ENCODE measurements at regions of chr12 and their contacts with region 1.

Region 1: DNA sequence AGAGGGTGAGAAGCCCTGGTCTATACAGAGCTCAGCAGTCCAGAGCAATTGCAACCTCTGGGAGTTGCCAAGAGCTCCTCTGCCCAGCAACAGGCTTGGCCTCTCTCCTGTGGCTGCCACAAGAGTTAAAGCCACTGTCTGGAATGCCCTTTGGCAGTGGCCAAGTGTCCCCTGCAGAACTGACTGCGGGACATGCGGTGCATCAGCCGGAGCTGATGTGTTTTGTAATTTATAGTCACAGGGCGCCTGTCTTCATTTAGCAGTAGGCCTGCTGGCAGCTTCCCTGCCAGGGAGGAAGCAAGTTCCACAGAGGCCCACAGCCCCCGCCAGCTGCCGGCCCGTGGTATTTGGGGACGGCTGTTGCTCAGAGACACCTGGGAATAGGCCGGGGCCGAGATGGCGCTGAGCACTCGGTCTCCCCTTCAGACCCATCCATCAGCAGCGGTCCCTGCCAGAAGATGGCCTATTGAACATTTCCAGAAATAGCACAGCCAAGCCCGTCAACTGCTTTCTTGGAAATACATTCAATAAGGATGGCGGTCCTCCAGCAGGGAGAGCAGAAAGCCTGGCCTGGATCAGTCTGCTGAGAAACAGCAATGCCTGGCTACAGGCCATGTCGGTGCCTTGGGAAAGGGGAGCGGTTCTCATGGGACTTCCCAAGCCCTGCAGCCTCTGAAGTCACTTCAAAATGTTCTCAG is 217.4 kb downstream of the CRADD start:
- DNase-seq: peak; percentile 92

Region 2: DNA sequence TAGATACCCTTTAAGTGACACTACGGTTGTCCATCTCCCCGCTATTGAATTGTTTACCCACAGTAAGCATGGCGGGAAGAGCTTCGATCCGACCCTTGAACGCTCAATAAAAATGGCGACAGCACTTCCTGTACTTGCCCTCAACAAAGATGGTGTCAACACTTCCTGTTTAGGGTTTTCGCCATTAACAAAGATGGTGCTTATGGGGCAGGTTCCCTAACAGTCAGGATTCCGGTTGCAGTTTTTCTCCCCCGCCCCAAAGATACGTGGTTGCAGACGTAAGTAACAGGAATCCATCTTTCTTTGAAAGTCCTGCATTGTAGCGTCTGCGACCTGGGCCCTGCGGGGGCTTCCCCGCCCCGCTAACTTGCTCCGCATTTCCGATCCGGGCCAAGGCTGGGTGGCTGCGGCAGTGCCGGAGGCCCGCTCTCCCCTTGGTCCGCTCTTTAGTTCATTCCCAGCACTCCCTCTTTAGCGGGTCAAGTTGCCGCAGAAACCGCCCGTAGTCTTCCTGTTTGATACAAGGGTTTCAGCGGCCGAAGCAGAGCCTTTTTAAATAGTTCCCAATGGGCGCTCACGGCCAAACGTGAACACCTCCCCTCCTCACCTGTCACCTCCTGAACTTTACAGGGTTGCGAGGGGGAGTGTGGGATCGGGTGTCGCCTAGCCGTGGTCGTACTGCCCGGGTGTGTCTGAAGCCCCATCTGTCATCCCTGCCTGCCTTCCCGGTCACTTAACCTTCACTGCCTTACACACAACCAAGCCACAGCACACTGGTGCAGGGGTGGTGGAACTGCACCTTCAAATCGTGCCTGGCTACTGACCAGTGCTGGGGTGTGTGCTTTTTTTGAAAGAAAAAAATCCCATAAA is 217.1 kb before region 1 on chr12 and contains the start of gene CRADD:
- intact Hi-C with region 1: loop called (anchors 2 kb)
- DNase-seq: peak; percentile 87
- total RNA-seq, gene CRADD: 50.8 TPM

Region 3: GRCh38 chr12:93785262-93786010 is 109.1 kb before region 1 on chr12:
- intact Hi-C with region 1: loop called (anchors 5 kb)
- DNase-seq: no peak

Region 4: GRCh38 chr12:93796729-93797128 is 97.8 kb before region 1 on chr12:
- intact Hi-C with region 1: no loop called
- DNase-seq: no peak

Region 5: DNA sequence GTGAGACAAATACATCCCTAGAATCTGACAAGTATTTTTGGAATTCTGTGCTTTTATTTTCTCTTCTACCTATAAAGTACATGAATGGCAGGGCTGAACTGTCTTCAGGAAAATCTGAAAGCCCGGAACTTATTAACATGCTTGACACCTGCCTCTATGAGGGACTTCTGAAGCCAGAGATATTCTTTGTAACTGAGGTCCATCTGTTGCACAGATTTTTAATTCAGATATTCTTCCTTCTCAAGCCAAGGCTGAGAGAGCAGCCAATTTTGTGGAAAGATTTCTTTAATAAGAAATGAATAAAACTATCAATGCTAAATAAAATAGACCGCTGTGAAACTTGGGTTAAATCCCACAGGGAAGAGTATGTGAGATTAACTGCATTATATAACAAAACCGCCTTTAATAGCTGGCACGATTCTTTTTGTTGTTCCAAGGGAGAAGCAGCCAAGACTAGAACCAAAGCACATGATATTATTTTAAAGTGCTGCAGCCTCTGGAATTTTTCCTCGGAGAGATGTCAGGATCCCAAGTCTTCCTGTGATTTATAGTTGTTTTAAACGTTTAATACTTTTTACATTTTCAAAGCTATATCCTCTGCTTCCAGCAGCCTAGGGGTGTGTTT is 68.5 kb before region 1 on chr12:
- intact Hi-C with region 1: loop called (anchors 5 kb)
- DNase-seq: no peak

Region 6: DNA sequence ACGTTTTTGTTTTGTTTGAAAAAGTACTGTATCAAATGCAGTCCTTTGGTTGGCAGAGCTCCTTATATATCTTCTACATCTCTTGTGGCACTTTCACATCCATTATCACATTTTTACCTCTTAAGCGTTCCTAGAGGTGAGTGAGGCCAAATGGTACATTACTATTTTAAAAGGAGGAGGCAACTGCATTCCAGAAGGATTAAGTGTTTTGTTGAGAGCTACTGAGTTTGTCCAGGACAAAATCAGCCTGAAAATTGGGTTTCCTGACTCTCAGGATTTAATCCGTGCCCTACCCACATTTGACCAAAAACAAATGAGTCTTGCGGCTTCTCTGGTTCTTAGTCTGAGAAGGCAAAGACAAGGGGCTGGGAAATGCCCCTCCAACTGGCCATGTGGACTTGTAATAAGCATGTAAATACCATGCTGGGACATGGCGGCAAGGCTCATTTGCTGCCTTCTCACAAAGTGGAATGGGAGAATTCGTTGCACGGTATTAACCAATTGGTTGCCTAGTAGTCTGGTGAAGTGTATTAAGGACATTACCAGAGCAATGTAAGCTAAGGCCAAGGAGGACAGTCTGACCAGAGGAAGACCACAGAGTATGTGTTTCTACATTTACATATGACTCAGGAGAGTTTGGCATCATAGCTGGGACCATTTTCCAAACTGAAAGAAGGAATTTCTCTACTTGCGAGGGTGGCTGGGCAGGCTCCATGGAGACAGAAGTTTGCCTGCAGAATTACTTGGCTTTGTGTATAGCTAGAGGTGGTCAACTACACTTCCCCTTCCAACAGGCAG is 78.1 kb after region 1 on chr12:
- intact Hi-C with region 1: loop called (anchors 5 kb)
- DNase-seq: no peak

Region 7: DNA sequence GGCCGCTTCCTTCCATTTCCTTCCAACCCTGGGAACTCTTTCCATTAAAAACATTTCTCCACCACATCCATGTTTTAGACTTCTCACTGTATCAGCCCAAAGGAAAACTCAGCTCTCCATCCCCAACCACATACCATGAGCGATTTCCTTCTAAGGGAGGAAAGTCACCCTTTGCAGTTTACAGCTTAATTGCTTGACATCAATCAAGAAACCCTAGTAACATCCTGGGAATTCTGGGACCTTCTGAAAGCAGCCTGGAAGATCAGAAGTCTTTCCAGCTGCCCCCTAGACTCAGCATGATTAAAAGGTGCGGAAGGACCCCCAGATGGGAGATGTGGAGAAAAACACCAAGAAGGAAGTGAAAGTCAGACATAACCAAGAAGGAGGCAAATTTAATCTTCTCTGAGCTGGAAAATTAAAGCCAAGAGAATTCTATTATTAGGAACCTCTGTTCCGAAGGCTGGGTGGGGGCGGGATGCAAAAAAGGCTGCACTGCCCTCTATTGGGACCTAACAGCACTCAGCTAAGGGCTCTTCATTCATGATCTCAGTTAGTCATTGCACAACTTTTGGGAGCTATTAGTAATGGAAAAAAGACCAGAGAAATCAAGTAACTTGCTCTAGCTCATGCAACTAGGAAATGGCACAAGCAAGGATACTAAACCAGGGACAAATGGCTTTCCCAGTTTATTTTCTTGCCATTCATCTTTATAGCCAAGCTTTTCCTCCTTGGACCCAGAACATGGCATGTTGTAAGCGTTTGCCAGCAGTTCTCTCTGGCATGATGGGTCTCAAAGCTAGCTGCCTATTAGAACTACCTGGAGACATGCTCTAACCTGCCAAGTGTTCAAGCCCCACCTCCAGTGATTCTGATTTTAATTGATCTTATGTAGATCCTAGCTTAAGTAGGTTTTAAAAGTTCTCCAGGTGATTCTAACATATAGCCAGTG is 180.7 kb after region 1 on chr12:
- intact Hi-C with region 1: loop called (anchors 2 kb)
- DNase-seq: no peak

Region 8: GRCh38 chr12:94121886-94122285 is 227.3 kb after region 1 on chr12:
- intact Hi-C with region 1: no loop called
- DNase-seq: no peak

Measured in cardiac septum (tissue), 1 donor.